Heart left ventricle (tissue), 16 donors: ENCODE measurements at regions of chr15 and their contacts with region 1.

Region 1: GRCh38 chr15:40421246-40422157 is 15.9 kb downstream of the IVD start:
- DNase-seq: peak; percentile 75 to 91 (median 80)
- ATAC-seq: peak; percentile 87 to 92 (median 90)
- H3K4me3 ChIP-seq: no peak overlapping the region
- H3K27ac ChIP-seq: peak overlapping the region; percentile 4 to 76 (median 69)
- H3K4me1 ChIP-seq: peaks cover 0 to 24% (median 18%) of the 10 kb centered on the region in 12 donors
- H3K27me3 ChIP-seq: no peaks in the 10 kb centered on the region
- CTCF ChIP-seq: peak; percentile 87 to 99 (median 94)
- POLR2A ChIP-seq: no peak

Region 2: DNA sequence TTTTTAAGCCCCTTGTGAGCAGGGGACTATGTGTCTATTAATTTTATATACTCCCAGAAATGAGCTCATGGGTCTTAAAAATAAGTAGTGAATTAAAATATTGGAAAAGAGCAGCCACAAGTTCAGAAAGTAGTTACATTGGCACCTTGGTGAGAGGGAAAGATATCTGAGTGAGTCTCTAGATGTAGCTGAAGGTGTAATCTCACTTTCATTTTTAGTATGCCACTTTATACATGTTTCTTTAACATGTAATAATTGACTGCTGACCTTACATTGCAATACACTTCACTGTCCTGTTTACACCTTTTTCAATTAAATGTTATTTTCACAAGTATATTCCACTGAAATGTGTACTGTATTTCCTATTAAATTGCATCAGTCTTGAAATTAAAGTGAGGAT is 194.8 kb before region 1 on chr15:
- intact Hi-C with region 1: loop called in 1 of 10 experiments (anchors 10 kb)
- DNase-seq: no peak
- ATAC-seq: no peak
- H3K4me3 ChIP-seq: no peak overlapping the region
- H3K27ac ChIP-seq: no peak overlapping the region
- H3K4me1 ChIP-seq: no peaks in the 10 kb centered on the region
- H3K27me3 ChIP-seq: no peaks in the 10 kb centered on the region
- CTCF ChIP-seq: no peak
- POLR2A ChIP-seq: no peak

Region 3: GRCh38 chr15:40289140-40289775 is 132.2 kb before region 1 on chr15:
- intact Hi-C with region 1: loop called in 1 of 10 experiments (anchors 5 kb)
- DNase-seq: peak in 2 of 5 donors; percentile 55 to 71
- ATAC-seq: peak in 1 of 4 donors; percentile 41
- H3K4me3 ChIP-seq: no peak overlapping the region
- H3K27ac ChIP-seq: no peak overlapping the region
- H3K4me1 ChIP-seq: peaks cover 0 to 53% (median 23%) of the 10 kb centered on the region in 12 donors
- H3K27me3 ChIP-seq: no peaks in the 10 kb centered on the region
- CTCF ChIP-seq: peak in 3 of 12 donors; percentile 4 to 28 (median 18)
- POLR2A ChIP-seq: no peak

Region 4: GRCh38 chr15:40323239-40323952 is 98.1 kb before region 1 on chr15 and contains the start of gene INAFM2:
- intact Hi-C with region 1: loop called (anchors 2 to 10 kb)
- DNase-seq: peak; percentile 92 to 96 (median 95)
- ATAC-seq: peak; percentile 81 to 91 (median 87)
- H3K4me3 ChIP-seq: peak within 1 kb of the TSS; percentile 72 to 94 (median 82)
- H3K27ac ChIP-seq: peak within 1 kb of the TSS; percentile 69 to 99 (median 90)
- H3K4me1 ChIP-seq: peaks cover under 1 to 59% (median 41%) of the 10 kb centered on the region in 12 donors
- H3K27me3 ChIP-seq: no peaks in the 10 kb centered on the region
- CTCF ChIP-seq: peak; percentile 62 to 88 (median 75)
- POLR2A ChIP-seq: no peak
- total RNA-seq, gene INAFM2: 28.6 to 92.7 (median 40.1) TPM

Region 5: DNA sequence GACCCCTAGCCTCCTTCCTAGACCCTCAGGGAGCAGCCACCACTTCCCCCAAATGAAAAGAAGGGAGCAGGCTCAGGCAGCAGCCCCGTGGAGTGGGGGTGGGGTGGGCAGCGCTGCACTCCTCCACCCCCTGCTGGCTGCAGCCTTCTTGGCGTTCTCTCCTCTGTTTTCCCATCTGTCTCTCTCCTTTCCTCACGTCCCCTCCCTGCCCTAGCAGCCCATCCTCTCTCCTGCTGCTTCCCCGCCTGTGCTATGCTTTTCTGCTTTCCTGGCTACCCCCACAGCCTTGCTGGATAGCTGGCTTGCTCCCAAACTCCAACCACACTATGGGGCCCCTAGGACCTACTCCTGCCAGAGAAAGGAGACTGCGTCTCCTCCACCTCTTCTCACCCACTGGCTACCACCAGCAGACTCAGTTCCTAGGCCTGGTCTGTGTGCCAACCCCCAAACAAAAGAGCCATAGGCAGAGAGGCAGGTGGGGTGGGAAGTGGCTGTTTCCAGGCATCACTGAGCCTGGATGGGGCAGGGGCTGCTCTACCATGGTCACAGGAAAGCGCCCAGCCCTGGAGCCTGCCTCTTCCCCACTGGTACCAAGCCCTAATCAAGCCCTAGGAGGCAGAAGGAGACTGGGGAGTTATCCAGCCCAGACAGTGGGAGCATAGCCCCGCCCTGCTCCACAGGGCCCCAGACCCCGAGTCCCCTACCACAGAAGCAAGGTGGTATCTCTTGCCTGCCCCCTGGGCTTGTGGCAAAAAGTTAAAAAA is 66.9 kb before region 1 on chr15:
- intact Hi-C with region 1: no loop called
- DNase-seq: peak in 2 of 5 donors; percentile 30 to 49
- ATAC-seq: peak in 2 of 4 donors; percentile 33 to 51
- H3K4me3 ChIP-seq: no peak overlapping the region
- H3K27ac ChIP-seq: no peak overlapping the region
- H3K4me1 ChIP-seq: peaks cover 0 to 29% (median 10%) of the 10 kb centered on the region in 12 donors
- H3K27me3 ChIP-seq: no peaks in the 10 kb centered on the region
- CTCF ChIP-seq: peak in 10 of 12 donors; percentile 3 to 54 (median 28)
- POLR2A ChIP-seq: no peak

Region 6: DNA sequence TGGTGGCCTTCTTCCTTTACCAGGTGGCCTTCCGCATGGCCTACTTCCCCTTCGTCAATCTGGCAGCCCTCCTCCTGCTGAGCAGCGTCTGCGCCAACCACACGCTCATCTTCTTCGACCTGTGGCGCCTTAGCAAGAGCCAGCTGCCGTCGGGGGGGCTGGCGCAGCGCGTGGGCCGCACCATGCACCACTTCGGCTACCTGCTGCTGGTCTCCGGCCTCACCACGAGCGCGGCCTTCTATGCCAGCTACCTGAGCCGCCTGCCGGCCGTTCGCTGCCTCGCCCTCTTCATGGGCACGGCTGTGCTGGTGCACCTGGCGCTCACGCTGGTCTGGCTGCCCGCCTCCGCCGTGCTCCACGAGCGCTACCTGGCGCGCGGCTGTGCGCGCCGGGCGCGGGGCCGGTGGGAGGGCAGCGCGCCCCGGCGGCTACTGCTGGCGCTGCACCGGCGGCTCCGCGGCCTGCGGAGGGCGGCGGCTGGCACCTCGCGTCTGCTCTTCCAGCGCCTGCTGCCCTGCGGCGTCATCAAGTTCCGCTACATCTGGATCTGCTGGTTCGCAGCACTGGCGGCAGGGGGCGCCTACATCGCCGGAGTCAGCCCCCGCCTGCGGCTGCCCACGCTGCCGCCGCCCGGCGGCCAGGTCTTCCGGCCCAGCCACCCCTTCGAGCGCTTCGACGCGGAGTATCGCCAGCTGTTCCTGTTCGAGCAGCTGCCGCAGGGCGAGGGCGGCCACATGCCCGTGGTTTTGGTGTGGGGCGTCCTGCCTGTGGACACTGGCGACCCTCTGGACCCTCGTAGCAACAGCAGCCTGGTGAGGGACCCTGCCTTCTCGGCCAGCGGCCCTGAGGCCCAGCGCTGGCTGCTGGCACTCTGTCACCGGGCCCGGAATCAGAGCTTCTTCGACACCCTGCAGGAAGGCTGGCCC is 53.6 kb before region 1 on chr15:
- intact Hi-C with region 1: loop called in 8 of 10 experiments (anchors 1 to 10 kb)
- DNase-seq: peak; percentile 81 to 94 (median 89)
- ATAC-seq: peak; percentile 39 to 80 (median 66)
- H3K4me3 ChIP-seq: peak overlapping the region in 10 of 12 donors; percentile 13 to 59 (median 46)
- H3K27ac ChIP-seq: peak overlapping the region; percentile 11 to 95 (median 86)
- H3K4me1 ChIP-seq: peaks cover 0 to 35% (median 20%) of the 10 kb centered on the region in 12 donors
- H3K27me3 ChIP-seq: no peaks in the 10 kb centered on the region
- CTCF ChIP-seq: peak; percentile 67 to 98 (median 86)
- POLR2A ChIP-seq: peak in 1 of 2 donors; percentile 23